ENCODE measurements at regions of chr5 and their contacts with region 1.

Region 1: DNA sequence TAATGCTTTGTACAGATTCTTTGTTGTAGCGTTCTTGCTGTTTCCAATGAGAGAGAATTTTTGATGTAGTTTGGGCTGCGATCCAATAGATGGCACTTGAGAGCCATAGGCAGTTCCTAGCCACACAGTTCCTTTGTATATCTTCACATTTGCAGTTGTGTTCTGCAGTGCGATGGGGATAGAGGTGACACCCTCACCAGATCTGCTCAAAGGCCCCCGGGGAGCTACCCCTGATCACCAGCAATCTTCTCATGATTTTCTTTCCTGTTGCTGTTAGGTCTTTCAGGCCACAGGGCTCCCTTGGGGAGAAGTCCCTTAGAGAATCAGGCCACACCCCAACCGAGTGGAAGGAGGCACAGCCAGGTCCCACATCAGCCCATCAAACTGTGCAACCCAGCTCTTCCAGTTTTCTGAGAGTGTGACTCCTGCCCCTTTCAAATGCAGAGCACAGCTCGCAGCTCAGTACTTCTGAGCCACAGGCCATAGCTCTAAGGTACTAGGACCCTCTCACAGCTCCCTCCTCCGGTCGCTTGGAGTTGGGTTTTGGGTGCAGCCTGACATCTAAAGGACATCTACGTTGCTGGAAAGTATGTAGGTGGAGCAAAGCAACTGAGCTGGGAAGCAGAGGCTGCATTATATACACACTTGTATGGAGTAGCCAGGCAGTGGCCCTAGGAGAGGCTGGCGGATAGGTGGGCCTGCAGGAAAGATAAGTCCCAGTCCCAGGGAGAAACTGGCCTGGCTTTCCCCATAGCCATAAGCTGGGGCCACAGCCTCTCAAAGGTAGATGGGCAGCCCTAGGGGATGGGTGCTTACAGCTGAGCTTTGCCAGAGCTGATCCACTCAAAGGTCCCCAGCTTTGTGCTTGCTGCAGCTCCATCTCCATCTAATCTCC is 353.5 kb downstream of the SLCO4C1 start:
- DNase-seq: peak; percentile 56
- H3K4me3 Mint-ChIP-seq: no peak overlapping the region
- H3K27ac Mint-ChIP-seq: no peak overlapping the region
- H3K4me1 Mint-ChIP-seq: peaks cover 10% of the 10 kb centered on the region
- H3K27me3 Mint-ChIP-seq: no peaks in the 10 kb centered on the region
- CTCF ChIP-seq: peak; percentile 73

Region 2: DNA sequence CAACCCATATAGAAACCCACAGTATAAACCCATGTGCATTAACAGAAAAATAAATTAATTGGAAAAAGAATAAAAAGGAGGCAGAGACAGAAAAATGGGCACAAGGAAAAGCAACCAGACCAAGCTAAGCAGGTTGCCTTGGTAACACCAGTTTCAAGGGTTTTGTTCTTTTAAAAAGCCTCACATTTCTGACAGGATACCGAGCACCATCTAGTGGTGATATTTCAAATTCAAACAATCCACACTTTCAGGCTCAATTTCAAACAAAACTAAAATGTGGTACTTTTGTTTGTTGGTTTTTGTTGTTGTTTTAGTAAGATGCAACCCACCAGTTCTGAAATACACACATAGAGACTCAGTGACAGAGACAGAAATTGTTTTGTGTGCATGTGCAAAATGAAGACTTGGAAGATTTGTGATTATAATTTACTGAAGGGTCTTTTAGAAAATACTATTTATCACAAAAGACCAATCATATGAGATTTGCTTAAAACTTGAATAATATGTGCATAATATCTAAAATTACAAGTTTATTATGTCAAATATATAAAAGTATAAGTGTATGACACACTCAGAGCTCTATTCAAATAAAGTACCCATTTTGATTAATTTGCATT is 35.3 kb after region 1 on chr5:
- CTCF ChIA-PET with region 1: no interaction called
- intact Hi-C with region 1: loop called (anchors 1 kb)
- DNase-seq: peak; percentile 20
- H3K4me3 Mint-ChIP-seq: no peak overlapping the region
- H3K27ac Mint-ChIP-seq: no peak overlapping the region
- H3K4me1 Mint-ChIP-seq: peaks cover 7% of the 10 kb centered on the region
- H3K27me3 Mint-ChIP-seq: no peaks in the 10 kb centered on the region
- CTCF ChIP-seq: peak; percentile 64

Region 3: DNA sequence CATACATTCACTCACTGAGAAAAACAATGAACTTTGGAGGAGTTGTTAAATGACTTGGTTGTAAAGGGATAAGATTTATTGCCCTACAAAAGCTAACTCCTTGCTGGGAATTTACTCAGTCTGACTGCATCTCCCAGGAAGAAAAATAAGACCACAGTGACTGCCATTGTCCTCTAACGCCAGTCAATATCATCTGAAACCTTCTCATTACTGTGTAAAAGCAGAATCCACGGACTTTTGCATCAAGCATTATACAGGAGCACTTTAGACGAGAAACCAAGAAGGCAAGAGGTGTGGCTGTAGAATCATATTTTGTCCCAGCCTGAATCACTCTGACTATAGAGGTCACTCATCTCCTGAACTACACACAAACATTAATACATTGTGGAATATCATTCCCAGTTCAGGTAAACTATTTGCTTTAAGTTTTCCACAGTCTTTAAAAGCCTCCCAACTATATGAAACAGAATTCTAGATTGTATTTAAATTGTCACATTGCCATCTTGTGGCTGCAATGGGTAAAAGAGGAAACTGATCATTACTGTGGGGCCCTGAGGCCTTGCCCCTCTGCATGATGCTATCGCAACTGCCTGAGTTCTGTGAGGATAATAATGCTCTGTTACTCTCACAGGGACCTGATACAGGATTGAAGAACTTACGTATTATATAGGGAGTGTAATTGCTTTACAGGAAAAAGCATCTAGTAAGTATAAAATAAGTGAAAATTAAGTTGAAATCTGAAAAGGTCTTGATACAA is 210.6 kb after region 1 on chr5:
- CTCF ChIA-PET with region 1: interaction called, 3 read pairs
- intact Hi-C with region 1: loop called (anchors 1 kb)
- DNase-seq: peak; percentile 41
- H3K4me3 Mint-ChIP-seq: no peak overlapping the region
- H3K27ac Mint-ChIP-seq: no peak overlapping the region
- H3K4me1 Mint-ChIP-seq: peaks cover 14% of the 10 kb centered on the region
- H3K27me3 Mint-ChIP-seq: no peaks in the 10 kb centered on the region
- CTCF ChIP-seq: peak; percentile 58